Left ventricle myocardium inferior (tissue), 1 donor: ENCODE measurements at regions of chr4 and their contacts with region 1.

Region 1: GRCh38 chr4:169293343-169294176 is 22.8 kb upstream of the SH3RF1 start:
- DNase-seq: no peak
- H3K4me3 ChIP-seq: no peak overlapping the region
- H3K27ac ChIP-seq: no peak overlapping the region
- H3K4me1 ChIP-seq: no peaks in the 10 kb centered on the region
- H3K27me3 ChIP-seq: peaks cover 4% of the 10 kb centered on the region
- CTCF ChIP-seq: no peak

Region 2: GRCh38 chr4:169327951-169328350 is 34.4 kb after region 1 on chr4:
- intact Hi-C with region 1: loop called (anchors 2 kb)
- DNase-seq: no peak
- H3K4me3 ChIP-seq: no peak overlapping the region
- H3K27ac ChIP-seq: no peak overlapping the region
- H3K4me1 ChIP-seq: no peaks in the 10 kb centered on the region
- H3K27me3 ChIP-seq: no peaks in the 10 kb centered on the region
- CTCF ChIP-seq: no peak

Region 3: DNA sequence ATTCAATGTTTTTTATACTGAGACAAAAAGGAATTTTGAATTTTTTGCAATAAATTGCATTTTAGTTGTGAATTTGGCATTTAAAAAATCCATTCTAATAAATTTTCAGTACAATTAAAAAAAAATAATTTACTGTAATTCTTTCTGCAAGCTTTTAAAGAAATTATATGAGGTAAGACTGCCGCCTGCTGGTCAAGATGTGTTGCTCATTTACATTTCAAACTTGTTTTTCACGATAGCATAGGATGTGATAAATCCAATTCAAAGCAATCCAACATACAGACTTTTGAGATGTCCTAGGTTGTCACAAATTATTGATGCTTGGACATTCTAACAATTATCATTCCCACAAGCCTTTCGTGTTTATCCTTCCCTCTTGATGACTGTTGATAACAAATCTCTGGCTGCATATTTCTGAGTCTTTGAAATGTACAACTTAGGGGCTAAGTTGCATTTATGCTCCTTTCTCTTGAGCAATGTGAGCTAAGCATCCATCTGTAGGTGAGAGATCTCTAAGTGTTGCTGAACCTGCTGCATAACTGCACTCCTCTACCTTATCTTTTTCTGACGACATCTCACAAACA is 754.3 kb after region 1 on chr4:
- intact Hi-C with region 1: no loop called
- DNase-seq: no peak
- H3K4me3 ChIP-seq: no peak overlapping the region
- H3K27ac ChIP-seq: no peak overlapping the region
- H3K4me1 ChIP-seq: no peaks in the 10 kb centered on the region
- H3K27me3 ChIP-seq: peaks cover 15% of the 10 kb centered on the region
- CTCF ChIP-seq: peak; percentile 80